ENCODE measurements at regions of chr2 and their contacts with region 1.

Region 1: GRCh38 chr2:73176881-73177644 is 25.3 kb upstream of the NOTO start:
- DNase-seq: peak; percentile 92
- ATAC-seq: peak; percentile 72
- H3K4me3 Mint-ChIP-seq: peak overlapping the region; percentile 86
- H3K27ac Mint-ChIP-seq: no peak overlapping the region
- H3K4me1 Mint-ChIP-seq: peaks cover 22% of the 10 kb centered on the region
- H3K27me3 Mint-ChIP-seq: peaks cover 95% of the 10 kb centered on the region
- CTCF ChIP-seq: peak; percentile 83

Region 2: GRCh38 chr2:72915907-72916742 is 260.9 kb before region 1 on chr2:
- CTCF ChIA-PET with region 1: interaction called, 16 read pairs
- POLR2A ChIA-PET with region 1: interaction called, 3 read pairs
- DNase-seq: peak; percentile 84
- ATAC-seq: peak; percentile 32
- H3K4me3 Mint-ChIP-seq: peak overlapping the region; percentile 84
- H3K27ac Mint-ChIP-seq: no peak overlapping the region
- H3K4me1 Mint-ChIP-seq: peaks cover 43% of the 10 kb centered on the region
- H3K27me3 Mint-ChIP-seq: peaks cover 61% of the 10 kb centered on the region
- CTCF ChIP-seq: no peak

Region 3: DNA sequence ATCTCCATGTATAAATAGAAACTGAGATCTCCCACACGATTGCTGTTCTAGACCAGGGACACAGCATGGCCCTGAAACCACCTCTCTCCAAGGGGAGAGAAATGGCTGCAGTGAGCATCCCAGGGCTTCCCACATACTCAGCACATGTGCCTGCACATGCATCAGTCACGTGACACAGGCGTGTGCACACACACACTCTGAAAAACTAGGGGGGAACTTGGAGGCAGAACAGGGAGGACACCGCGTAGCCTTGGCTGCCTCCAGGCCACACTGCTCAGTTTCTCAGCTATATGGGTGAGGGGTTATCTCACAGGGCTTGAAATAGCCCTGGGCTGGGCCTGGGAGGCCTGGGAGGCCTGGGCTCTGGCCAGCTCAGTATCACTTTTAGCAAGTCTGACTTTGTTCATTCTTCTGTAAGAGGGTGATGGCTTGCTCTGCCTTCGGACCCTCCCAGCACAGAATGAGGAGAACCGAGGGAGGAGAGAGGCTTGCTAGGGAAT is 192.8 kb before region 1 on chr2:
- CTCF ChIA-PET with region 1: interaction called, 10 read pairs
- POLR2A ChIA-PET with region 1: no interaction called
- DNase-seq: no peak
- ATAC-seq: no peak
- H3K4me3 Mint-ChIP-seq: no peak overlapping the region
- H3K27ac Mint-ChIP-seq: peak overlapping the region; percentile 39; the same call in 1 of the 2 replicates
- H3K4me1 Mint-ChIP-seq: peaks cover 13% of the 10 kb centered on the region
- H3K27me3 Mint-ChIP-seq: no peaks in the 10 kb centered on the region
- CTCF ChIP-seq: no peak

Region 4: DNA sequence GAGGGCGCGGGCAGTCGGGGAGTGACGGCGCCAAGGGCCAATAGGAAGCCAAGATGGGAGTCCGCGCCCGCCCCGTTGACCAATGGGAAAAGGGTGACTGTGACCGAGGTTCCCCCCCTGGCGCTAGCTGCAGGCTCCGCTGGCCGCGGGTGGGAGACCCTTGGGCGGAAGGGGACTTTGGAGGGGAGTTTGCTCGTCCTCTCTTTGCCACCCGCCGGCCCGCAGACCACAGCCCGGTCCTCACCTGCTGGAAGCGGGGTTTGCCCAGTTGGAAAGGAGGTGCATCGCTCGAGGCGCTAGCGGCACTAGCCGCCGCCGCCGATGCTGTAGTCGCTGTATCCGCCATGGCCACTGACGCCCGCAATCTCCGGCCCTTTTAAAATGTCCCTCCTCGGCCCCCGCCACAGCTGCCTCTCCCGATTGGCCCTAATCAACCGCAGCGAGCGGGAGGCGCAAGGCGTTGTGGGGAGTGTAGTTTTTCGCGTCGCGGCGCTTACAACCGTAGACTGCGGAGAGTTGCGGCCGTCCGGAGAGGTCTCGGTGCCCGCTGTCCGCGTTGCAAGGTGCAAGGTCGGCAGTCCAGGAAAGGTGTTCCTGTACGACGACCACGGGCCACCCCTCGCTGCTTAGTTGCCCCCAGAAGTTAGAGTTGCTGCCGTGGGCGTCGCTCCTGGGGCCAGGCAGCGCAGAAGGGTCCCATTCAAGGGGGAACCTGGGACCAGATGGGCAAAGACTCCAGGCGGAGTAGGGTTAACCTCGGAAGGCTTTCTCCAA is 105.5 kb before region 1 on chr2 and contains the start of gene SFXN5:
- CTCF ChIA-PET with region 1: interaction called, 10 read pairs
- POLR2A ChIA-PET with region 1: interaction called, 5 read pairs
- DNase-seq: peak; percentile 99
- ATAC-seq: peak; percentile 86
- H3K4me3 Mint-ChIP-seq: peak within 1 kb of the TSS; percentile 77
- H3K27ac Mint-ChIP-seq: peak within 1 kb of the TSS; percentile 78
- H3K4me1 Mint-ChIP-seq: peaks cover 22% of the 10 kb centered on the region
- H3K27me3 Mint-ChIP-seq: no peaks in the 10 kb centered on the region; the same call in 1 of the 2 replicates
- CTCF ChIP-seq: no peak
- total RNA-seq, gene SFXN5: 23.1 to 25.9 TPM (median 23.6 TPM) in 3 replicates

Region 5: DNA sequence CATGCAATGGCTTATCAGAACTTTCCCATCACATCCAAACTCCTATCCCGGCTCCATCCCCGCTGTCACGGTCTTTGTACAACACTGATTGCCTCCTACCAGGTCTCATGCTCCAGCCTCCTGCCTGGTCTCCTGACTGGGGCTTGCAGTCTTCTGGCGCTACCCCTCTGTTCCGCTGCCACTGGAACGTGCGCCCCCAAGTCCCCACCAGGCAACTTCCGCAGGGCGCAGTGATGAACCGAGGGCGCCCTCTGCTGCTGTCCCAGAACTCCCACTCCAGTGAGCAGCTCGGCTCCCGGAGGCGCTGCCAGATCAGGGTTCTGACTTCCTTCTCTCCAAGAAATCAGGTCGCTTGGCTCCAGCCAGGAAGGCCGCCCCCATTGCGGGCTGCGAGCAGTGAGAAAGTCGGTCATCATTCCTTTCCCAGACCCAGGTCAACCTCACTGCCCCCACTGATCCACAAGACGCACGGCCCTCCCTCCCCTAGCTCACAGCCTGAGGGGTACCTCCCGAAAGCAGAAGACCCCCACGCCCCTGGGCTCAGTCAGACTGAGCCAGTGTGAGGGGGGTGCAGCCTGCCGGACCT is 20.4 kb before region 1 on chr2:
- CTCF ChIA-PET with region 1: interaction called, 44 read pairs
- POLR2A ChIA-PET with region 1: interaction called, 3 read pairs
- DNase-seq: peak; percentile 88
- ATAC-seq: peak; percentile 99
- H3K4me3 Mint-ChIP-seq: peak overlapping the region; percentile 62
- H3K27ac Mint-ChIP-seq: no peak overlapping the region
- H3K4me1 Mint-ChIP-seq: peaks cover 6% of the 10 kb centered on the region
- H3K27me3 Mint-ChIP-seq: peaks cover 24% of the 10 kb centered on the region
- CTCF ChIP-seq: peak; percentile 51

Region 6: GRCh38 chr2:73212448-73213176 is 35.5 kb after region 1 on chr2:
- CTCF ChIA-PET with region 1: interaction called, 179 read pairs
- POLR2A ChIA-PET with region 1: interaction called, 6 read pairs
- DNase-seq: peak; percentile 86
- ATAC-seq: peak; percentile 77
- H3K4me3 Mint-ChIP-seq: no peak overlapping the region
- H3K27ac Mint-ChIP-seq: peak overlapping the region; percentile 57
- H3K4me1 Mint-ChIP-seq: peaks cover 35% of the 10 kb centered on the region
- H3K27me3 Mint-ChIP-seq: peaks cover 19% of the 10 kb centered on the region
- CTCF ChIP-seq: peak; percentile 81

Measured in WTC11 (cell line).